Activated T-helper 1 cell treated with anti-CD3 and anti-CD28 coated beads, Interleukin-12 subunit alpha, Interleukin-12 subunit beta, Interleukin-2, Interleukin-4 antibody, amounts not matched to agents 30 ng/mL and 10 ng/mL and 1 ng/mL, durations not matched to agents 14 hours and 24 hours and 36 hours (primary cell): ENCODE measurements at regions of chr17 and their contacts with region 1.

Region 1: DNA sequence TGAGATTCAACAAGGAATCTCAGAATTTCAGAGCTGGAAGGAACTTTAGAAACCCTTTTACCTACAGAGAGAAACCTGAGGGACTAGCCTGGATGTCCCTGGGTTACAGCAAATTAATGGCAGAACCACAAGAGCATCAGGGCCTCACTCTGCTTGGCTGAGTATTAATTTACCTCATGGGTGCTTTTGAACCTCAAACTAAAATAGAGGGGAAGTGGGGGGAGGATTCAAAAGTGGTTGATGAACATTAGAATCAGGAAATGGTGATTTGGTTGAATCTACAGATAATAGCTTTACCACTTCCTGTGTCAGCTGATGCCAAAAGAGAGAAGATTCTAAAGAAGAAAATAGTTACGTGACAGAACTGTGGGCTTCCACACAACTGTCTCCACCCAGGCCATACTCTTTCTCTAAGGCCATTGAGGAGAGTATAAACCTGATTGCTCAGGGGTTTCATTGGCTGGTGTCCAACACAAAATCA is 11.3 kb upstream of the SKAP1 start:
- DNase-seq: peak; percentile 42
- H3K4me3 Mint-ChIP-seq: peak overlapping the region; percentile 59
- H3K27ac Mint-ChIP-seq: peak overlapping the region; percentile 93
- H3K4me1 Mint-ChIP-seq: peaks cover 88% of the 10 kb centered on the region
- H3K27me3 Mint-ChIP-seq: no peaks in the 10 kb centered on the region

Region 2: GRCh38 chr17:48429638-48430586 is 11.4 kb before region 1 on chr17 and contains the start of gene SKAP1:
- intact Hi-C with region 1: loop called (anchors 1 kb)
- DNase-seq: peak; percentile 68
- H3K4me3 Mint-ChIP-seq: peak within 1 kb of the TSS; percentile 98
- H3K27ac Mint-ChIP-seq: peak within 1 kb of the TSS; percentile 99
- H3K4me1 Mint-ChIP-seq: peaks cover 72% of the 10 kb centered on the region
- H3K27me3 Mint-ChIP-seq: peaks cover 1% of the 10 kb centered on the region
- total RNA-seq, gene SKAP1: 48.7 and 51.9 TPM in 2 replicates

Region 3: GRCh38 chr17:48483471-48484131 is 42.3 kb after region 1 on chr17:
- intact Hi-C with region 1: loop called (anchors 5 kb)
- DNase-seq: peak; percentile 40
- H3K4me3 Mint-ChIP-seq: peak overlapping the region; percentile 37
- H3K27ac Mint-ChIP-seq: peak overlapping the region; percentile 70
- H3K4me1 Mint-ChIP-seq: peaks cover 46% of the 10 kb centered on the region
- H3K27me3 Mint-ChIP-seq: no peaks in the 10 kb centered on the region